ENCODE measurements at regions of chr5 and their contacts with region 1.

Region 1: GRCh38 chr5:82225525-82226172 is 52.5 kb downstream of the RPS23 start:
- DNase-seq: peak; percentile 58 to 65 (median 63)
- H3K4me3 ChIP-seq: no peak overlapping the region
- H3K4me3 Mint-ChIP-seq: peak overlapping the region in 1 of 8 donors; percentile 51
- H3K27ac ChIP-seq: no peak overlapping the region
- H3K27ac Mint-ChIP-seq: peak overlapping the region in 2 of 7 donors; percentile 4 to 43
- H3K4me1 ChIP-seq: no peaks in the 10 kb centered on the region
- H3K4me1 Mint-ChIP-seq: peaks cover 3 to 14% (median 5%) of the 10 kb centered on the region in 4 donors
- H3K27me3 ChIP-seq: no peaks in the 10 kb centered on the region
- H3K27me3 Mint-ChIP-seq: no peaks in the 10 kb centered on the region

Region 2: DNA sequence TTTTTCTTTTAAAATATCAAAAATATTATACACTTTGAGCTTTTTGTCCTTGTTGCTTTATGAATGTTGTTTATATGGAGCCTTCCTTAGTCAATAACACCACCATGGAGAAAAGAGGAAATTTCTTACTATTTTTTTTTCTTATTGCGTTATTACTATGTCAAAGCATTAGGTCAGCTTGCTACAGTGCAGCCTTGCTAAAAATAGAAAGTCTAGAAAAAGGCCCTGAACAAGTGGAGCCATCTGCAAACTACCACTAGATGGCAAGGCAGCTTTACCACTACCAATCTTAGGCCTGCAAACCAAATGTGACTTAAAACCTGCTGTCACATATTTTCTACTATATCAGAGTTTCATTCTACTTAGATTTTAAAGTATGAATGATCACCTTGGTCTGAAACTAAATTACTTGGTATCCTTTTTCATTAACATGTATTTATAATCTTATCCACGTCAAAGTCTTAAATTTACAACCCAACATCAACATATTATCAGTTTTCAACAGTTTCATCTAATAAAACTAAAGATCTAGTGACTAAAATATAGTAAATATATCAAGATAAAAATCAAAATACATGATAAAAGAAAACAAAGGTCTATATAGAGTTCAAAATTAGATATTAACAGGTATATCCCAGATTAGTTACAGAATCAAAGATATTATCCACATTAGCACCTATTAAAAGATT is 718.6 kb before region 1 on chr5:
- CTCF ChIA-PET with region 1: interaction called, 8 read pairs
- POLR2A ChIA-PET with region 1: no interaction called
- intact Hi-C with region 1: loop called (anchors 1 kb)
- DNase-seq: peak; percentile 36 to 52 (median 41)
- H3K4me3 ChIP-seq: no peak overlapping the region
- H3K4me3 Mint-ChIP-seq: no peak overlapping the region
- H3K27ac ChIP-seq: no peak overlapping the region
- H3K27ac Mint-ChIP-seq: no peak overlapping the region
- H3K4me1 ChIP-seq: no peaks in the 10 kb centered on the region
- H3K4me1 Mint-ChIP-seq: peaks cover 0 to 6% (median under 1%) of the 10 kb centered on the region in 4 donors
- H3K27me3 ChIP-seq: no peaks in the 10 kb centered on the region
- H3K27me3 Mint-ChIP-seq: no peaks in the 10 kb centered on the region

Region 3: DNA sequence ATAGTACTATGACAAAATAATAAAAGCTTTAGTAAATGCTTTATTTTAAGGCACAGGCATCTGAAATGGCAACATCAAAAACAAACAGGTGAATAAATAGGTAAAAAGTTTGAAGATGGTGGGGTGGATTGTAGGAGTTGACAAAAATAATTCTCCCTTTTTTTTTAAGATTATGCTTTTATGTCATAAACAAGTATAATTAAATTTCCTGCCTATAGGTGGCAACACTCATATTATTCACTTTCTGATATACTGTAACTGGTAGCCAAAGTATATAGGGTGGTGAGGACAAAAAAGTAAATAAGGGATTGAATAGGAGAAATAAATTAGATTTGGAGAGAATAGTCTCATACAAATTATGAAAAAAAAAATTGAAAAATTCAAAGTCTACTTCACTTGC is 711.7 kb before region 1 on chr5:
- CTCF ChIA-PET with region 1: interaction called, 8 read pairs
- POLR2A ChIA-PET with region 1: no interaction called
- intact Hi-C with region 1: loop called (anchors 2 kb)
- DNase-seq: peak in 4 of 5 donors; percentile 7 to 19 (median 12)
- H3K4me3 ChIP-seq: no peak overlapping the region
- H3K4me3 Mint-ChIP-seq: no peak overlapping the region
- H3K27ac ChIP-seq: no peak overlapping the region
- H3K27ac Mint-ChIP-seq: no peak overlapping the region
- H3K4me1 ChIP-seq: no peaks in the 10 kb centered on the region
- H3K4me1 Mint-ChIP-seq: peaks cover 0 to 3% (median under 1%) of the 10 kb centered on the region in 4 donors
- H3K27me3 ChIP-seq: no peaks in the 10 kb centered on the region
- H3K27me3 Mint-ChIP-seq: no peaks in the 10 kb centered on the region

Region 4: DNA sequence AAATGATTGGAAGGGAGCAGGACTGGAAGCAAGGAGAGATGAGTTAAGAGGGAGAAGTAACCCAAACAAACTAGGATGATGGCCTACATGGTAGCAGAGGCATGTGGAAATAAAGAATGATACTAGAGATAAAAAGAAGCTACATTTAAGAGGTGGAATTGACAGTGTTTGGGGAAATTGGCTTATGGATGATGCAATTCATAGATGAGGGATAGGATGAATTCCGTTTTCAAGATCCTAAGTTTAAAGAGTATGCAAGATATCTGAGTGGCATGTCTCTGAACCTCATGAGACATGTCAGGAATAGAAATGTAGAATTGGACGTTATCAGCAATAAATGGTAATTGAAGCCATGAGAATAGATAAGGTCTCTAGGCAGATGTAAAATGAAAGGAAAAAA is 21.1 kb before region 1 on chr5:
- CTCF ChIA-PET with region 1: no interaction called
- POLR2A ChIA-PET with region 1: no interaction called
- intact Hi-C with region 1: no loop called
- DNase-seq: no peak
- H3K4me3 ChIP-seq: no peak overlapping the region
- H3K4me3 Mint-ChIP-seq: no peak overlapping the region
- H3K27ac ChIP-seq: no peak overlapping the region
- H3K27ac Mint-ChIP-seq: no peak overlapping the region
- H3K4me1 ChIP-seq: no peaks in the 10 kb centered on the region
- H3K4me1 Mint-ChIP-seq: no peaks in the 10 kb centered on the region
- H3K27me3 ChIP-seq: no peaks in the 10 kb centered on the region
- H3K27me3 Mint-ChIP-seq: no peaks in the 10 kb centered on the region